Activated CD8-positive, alpha-beta T cell treated with anti-CD3 and anti-CD28 coated beads, Interleukin-2, amount 10 ng/mL, durations not matched to agents 7 days and 5 days (primary cell): ENCODE measurements at regions of chr10 and their contacts with region 1.

Region 1: GRCh38 chr10:91632671-91633550 is at the start of gene PPP1R3C:
- DNase-seq: peak; percentile 51
- ATAC-seq: peak; percentile 87
- H3K4me3 Mint-ChIP-seq: peak within 1 kb of the TSS; percentile 67
- H3K27ac Mint-ChIP-seq: no peak within 1 kb of the TSS
- H3K4me1 Mint-ChIP-seq: peaks cover 8% of the 10 kb centered on the region
- H3K27me3 Mint-ChIP-seq: peaks cover 46% of the 10 kb centered on the region
- total RNA-seq, gene PPP1R3C: not detected

Region 2: DNA sequence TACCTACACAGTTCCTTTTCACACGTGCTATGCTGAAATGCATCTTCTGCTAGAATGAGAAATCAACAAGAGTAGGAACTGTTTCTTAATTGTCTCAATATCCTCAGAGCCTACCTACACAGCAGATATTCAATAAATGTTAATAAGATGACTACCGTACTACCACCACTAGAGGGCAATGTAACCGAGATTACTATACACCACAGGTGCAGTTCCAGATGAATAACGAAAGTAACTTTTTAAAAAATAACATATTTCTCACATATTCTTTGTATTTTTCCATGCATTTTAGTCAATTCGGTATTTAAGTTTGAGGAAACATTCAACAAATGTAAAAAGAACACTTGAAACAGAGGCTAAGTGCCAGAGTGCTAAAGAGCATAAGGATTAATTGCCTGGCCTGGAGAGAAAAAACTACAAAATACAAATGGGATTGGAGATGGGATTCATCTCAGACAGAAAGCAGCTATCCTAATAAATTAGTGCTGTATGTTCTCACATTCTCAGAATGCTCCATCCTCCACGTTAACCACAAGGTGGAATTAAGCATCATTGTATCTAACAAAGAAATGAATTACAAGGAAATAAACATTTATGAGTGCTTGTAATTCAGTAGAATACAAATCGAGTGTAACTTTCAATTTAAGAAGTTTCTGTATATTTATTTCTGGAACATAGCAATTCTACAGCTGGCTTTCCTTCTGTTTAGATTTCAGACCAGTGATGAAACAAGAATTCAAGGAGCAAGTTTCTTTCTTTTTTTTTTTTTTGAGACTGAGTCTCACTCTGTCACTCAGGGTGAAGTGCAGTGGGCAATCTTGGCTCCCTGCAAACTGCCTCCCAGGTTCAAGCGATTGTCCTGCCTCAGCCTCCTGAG is 243.0 kb before region 1 on chr10:
- CTCF ChIA-PET with region 1: interaction called, 19 read pairs
- POLR2A ChIA-PET with region 1: interaction called, 3 read pairs
- DNase-seq: peak; percentile 44
- ATAC-seq: peak; percentile 96
- H3K4me3 Mint-ChIP-seq: no peak overlapping the region
- H3K27ac Mint-ChIP-seq: no peak overlapping the region
- H3K4me1 Mint-ChIP-seq: peaks cover 6% of the 10 kb centered on the region
- H3K27me3 Mint-ChIP-seq: peaks cover 26% of the 10 kb centered on the region

Region 3: GRCh38 chr10:91621483-91622113 is 11.3 kb before region 1 on chr10:
- CTCF ChIA-PET with region 1: interaction called, 10 read pairs
- POLR2A ChIA-PET with region 1: no interaction called
- DNase-seq: no peak
- ATAC-seq: no peak
- H3K4me3 Mint-ChIP-seq: no peak overlapping the region
- H3K27ac Mint-ChIP-seq: no peak overlapping the region
- H3K4me1 Mint-ChIP-seq: no peaks in the 10 kb centered on the region
- H3K27me3 Mint-ChIP-seq: peaks cover 16% of the 10 kb centered on the region